ENCODE measurements at regions of chr1 and their contacts with region 1.

Region 1: DNA sequence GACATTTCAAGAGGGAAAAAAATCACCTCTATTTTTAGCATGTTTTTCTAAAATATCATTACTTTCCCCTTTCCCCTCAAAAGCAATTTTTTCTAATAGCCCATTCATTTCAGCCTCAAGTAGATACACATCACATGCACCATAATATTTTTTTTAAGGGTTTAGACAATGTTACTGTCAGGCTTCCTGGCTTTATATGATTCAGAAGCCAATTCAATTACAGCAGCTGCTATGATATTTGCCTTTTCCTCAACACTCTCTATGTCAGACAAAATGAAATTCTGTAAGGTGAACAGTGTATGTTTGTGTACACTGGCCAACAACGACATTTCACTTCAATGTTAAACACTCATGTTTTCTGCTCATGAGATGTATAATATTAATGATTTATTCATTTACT is 46.5 kb downstream of the OMA1 start:
- DNase-seq: no peak
- ATAC-seq: no peak
- H3K4me3 ChIP-seq: no peak overlapping the region
- H3K4me3 Mint-ChIP-seq: no peak overlapping the region
- H3K27ac ChIP-seq: no peak overlapping the region
- H3K27ac Mint-ChIP-seq: no peak overlapping the region
- H3K4me1 ChIP-seq: peaks cover 0 to 2% of the 10 kb centered on the region in 2 experiments
- H3K4me1 Mint-ChIP-seq: peaks cover 12 to 18% (median 16%) of the 10 kb centered on the region in 3 donors
- H3K27me3 ChIP-seq: no peaks in the 10 kb centered on the region
- H3K27me3 Mint-ChIP-seq: no peaks in the 10 kb centered on the region

Region 2: DNA sequence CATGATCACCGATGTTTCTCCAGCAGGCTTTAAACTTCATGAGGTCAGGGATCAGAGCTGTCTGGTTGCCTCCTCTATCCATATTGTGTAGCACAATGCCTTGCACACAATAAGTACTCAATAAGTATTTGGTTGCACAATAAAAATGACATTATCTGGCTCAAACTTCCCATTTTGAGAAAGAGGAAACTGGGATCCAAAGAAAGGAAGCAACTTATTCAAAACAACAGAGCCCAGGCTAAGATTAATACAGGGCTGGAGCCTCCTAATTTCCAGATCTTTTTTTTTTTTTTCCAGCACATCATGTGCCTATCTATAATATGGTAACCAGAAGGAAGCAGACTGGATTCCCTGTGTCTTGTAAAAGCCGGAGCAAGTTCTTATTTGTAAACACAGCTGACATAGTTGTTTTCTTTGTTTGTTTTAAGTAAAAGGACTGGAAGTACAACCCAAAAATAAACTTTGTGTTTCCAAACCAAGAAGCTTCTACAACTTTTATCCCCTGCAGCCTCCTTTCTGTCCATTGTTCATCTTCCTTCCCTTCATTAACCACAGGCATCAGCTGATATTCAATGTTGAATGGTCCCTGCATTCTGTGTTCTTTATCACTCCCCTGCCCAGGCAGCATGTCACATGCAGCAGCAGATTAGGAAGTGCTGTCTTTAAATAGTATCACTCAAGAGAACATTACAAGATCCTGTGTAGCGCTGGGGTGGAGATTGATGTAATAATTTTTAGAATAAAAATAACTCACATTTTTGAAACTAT is 1243.5 kb after region 1 on chr1:
- CTCF ChIA-PET with region 1: no interaction called
- POLR2A ChIA-PET with region 1: interaction called in 1 of 2 experiments, 10 read pairs
- DNase-seq: no peak
- ATAC-seq: no peak
- H3K4me3 ChIP-seq: no peak overlapping the region
- H3K4me3 Mint-ChIP-seq: no peak overlapping the region
- H3K27ac ChIP-seq: no peak overlapping the region
- H3K27ac Mint-ChIP-seq: no peak overlapping the region
- H3K4me1 ChIP-seq: no peaks in the 10 kb centered on the region
- H3K4me1 Mint-ChIP-seq: no peaks in the 10 kb centered on the region
- H3K27me3 ChIP-seq: no peaks in the 10 kb centered on the region
- H3K27me3 Mint-ChIP-seq: no peaks in the 10 kb centered on the region